WTC11 (cell line): ENCODE measurements at regions of chr16 and their contacts with region 1.

Region 1: GRCh38 chr16:12067714-12068401 is 91.3 kb downstream of the SNX29 start:
- DNase-seq: peak; percentile 41
- ATAC-seq: peak; percentile 66
- H3K4me3 Mint-ChIP-seq: no peak overlapping the region
- H3K27ac Mint-ChIP-seq: no peak overlapping the region
- H3K4me1 Mint-ChIP-seq: no peaks in the 10 kb centered on the region
- H3K27me3 Mint-ChIP-seq: no peaks in the 10 kb centered on the region
- CTCF ChIP-seq: peak; percentile 91

Region 2: GRCh38 chr16:11797166-11797956 is 270.5 kb before region 1 on chr16 and contains the start of gene ZC3H7A:
- CTCF ChIA-PET with region 1: interaction called, 13 read pairs
- POLR2A ChIA-PET with region 1: no interaction called
- DNase-seq: peak; percentile 95
- ATAC-seq: peak; percentile 99
- H3K4me3 Mint-ChIP-seq: peak within 1 kb of the TSS; percentile 86
- H3K27ac Mint-ChIP-seq: peak within 1 kb of the TSS; percentile 96
- H3K4me1 Mint-ChIP-seq: peaks cover 35% of the 10 kb centered on the region
- H3K27me3 Mint-ChIP-seq: no peaks in the 10 kb centered on the region
- CTCF ChIP-seq: peak; percentile 90
- total RNA-seq, gene ZC3H7A: 39.9 to 45.9 TPM (median 43.0 TPM) in 3 replicates

Region 3: DNA sequence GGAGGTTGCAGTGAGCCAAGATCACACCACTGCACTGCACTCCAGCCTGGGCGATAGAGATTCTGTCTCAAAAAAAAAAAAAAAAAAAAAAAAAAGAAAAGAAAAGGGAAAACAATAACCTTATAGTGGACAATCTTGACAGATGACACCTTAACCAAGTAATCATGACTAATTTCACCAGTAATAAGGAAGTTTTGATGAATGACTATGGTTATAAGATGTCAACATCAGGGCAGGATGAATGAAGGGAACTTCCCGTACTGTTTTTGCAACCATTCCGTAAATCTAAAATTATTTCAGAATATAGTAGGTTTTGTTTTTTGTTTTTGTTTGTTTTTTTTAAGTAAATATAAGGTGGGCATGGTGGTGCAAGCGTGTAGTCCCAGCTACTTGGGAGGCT is 175.1 kb before region 1 on chr16:
- CTCF ChIA-PET with region 1: interaction called, 14 read pairs
- POLR2A ChIA-PET with region 1: no interaction called
- DNase-seq: no peak
- ATAC-seq: no peak
- H3K4me3 Mint-ChIP-seq: no peak overlapping the region
- H3K27ac Mint-ChIP-seq: no peak overlapping the region
- H3K4me1 Mint-ChIP-seq: no peaks in the 10 kb centered on the region
- H3K27me3 Mint-ChIP-seq: no peaks in the 10 kb centered on the region
- CTCF ChIP-seq: no peak

Region 4: GRCh38 chr16:11957591-11958395 is 110.1 kb before region 1 on chr16:
- CTCF ChIA-PET with region 1: interaction called, 15 read pairs
- POLR2A ChIA-PET with region 1: interaction called, 3 read pairs
- DNase-seq: no peak
- ATAC-seq: no peak
- H3K4me3 Mint-ChIP-seq: no peak overlapping the region
- H3K27ac Mint-ChIP-seq: no peak overlapping the region
- H3K4me1 Mint-ChIP-seq: no peaks in the 10 kb centered on the region
- H3K27me3 Mint-ChIP-seq: no peaks in the 10 kb centered on the region
- CTCF ChIP-seq: no peak

Region 5: GRCh38 chr16:11972128-11972527 is 95.7 kb before region 1 on chr16:
- CTCF ChIA-PET with region 1: interaction called, 21 read pairs
- POLR2A ChIA-PET with region 1: no interaction called
- DNase-seq: peak; percentile 18
- ATAC-seq: peak; percentile 27; the same call in 1 of the 2 replicates
- H3K4me3 Mint-ChIP-seq: no peak overlapping the region
- H3K27ac Mint-ChIP-seq: peak overlapping the region; percentile 32; the same call in 1 of the 2 replicates
- H3K4me1 Mint-ChIP-seq: peaks cover 13% of the 10 kb centered on the region
- H3K27me3 Mint-ChIP-seq: no peaks in the 10 kb centered on the region
- CTCF ChIP-seq: no peak

Region 6: GRCh38 chr16:12020009-12020408 is 47.8 kb before region 1 on chr16:
- CTCF ChIA-PET with region 1: interaction called, 10 read pairs
- POLR2A ChIA-PET with region 1: no interaction called
- DNase-seq: no peak
- ATAC-seq: no peak
- H3K4me3 Mint-ChIP-seq: no peak overlapping the region
- H3K27ac Mint-ChIP-seq: no peak overlapping the region
- H3K4me1 Mint-ChIP-seq: no peaks in the 10 kb centered on the region
- H3K27me3 Mint-ChIP-seq: no peaks in the 10 kb centered on the region
- CTCF ChIP-seq: no peak

Region 7: DNA sequence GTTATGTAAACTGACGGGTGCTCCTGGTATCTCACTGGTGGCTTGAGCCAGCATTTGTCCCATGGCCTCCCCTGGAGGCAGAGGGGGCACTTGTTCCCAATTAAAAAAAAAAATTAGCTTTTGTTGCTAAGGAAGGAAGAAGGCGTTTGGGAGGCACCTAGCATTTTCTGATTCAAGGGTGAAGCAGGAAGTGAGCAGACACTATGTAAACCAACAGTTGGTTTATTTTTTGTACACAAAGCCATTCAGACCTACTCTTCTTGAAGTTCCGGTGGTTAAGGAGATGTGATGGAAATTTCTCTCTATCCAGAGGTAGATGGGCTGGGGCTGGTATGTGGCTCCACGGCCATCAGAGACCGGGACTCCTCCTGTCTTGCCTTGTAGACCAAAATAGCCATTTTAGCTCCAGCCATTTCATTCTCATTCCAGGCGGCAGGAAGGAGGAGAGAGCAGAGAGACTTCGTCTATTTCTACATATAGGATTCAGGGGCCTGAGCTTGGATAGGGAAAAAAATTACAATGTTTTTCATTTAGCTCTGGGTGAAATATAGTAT is 11.6 kb after region 1 on chr16:
- CTCF ChIA-PET with region 1: interaction called, 25 read pairs
- POLR2A ChIA-PET with region 1: no interaction called
- DNase-seq: no peak
- ATAC-seq: no peak
- H3K4me3 Mint-ChIP-seq: no peak overlapping the region
- H3K27ac Mint-ChIP-seq: peak overlapping the region; percentile 26; the same call in 1 of the 2 replicates
- H3K4me1 Mint-ChIP-seq: peaks cover 16% of the 10 kb centered on the region
- H3K27me3 Mint-ChIP-seq: peaks cover 2% of the 10 kb centered on the region; the same call in 1 of the 2 replicates
- CTCF ChIP-seq: no peak

Region 8: DNA sequence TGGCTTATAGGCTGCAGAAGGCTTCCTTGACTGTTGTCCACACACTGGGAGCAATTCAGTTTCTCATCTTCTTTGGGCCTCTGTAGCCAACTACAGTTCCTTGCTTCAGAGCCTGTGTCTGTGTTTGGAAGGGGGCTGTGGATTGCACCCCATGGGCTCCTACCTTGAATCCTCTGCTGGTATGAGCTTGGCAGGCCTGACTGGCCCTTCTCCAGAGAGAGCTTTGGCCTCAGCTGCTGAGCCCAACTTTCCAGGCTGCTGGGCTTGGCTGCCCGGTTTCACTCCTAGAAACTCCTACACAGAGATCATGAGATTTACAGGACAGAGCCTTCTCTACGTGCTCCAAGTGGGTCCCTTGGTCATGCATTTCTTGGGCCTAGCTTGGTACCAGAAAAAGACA is 263.1 kb after region 1 on chr16:
- CTCF ChIA-PET with region 1: no interaction called
- POLR2A ChIA-PET with region 1: no interaction called
- DNase-seq: no peak
- ATAC-seq: no peak
- H3K4me3 Mint-ChIP-seq: no peak overlapping the region
- H3K27ac Mint-ChIP-seq: no peak overlapping the region
- H3K4me1 Mint-ChIP-seq: no peaks in the 10 kb centered on the region
- H3K27me3 Mint-ChIP-seq: no peaks in the 10 kb centered on the region
- CTCF ChIP-seq: no peak